A549 (cell line): ENCODE measurements at regions of chr7 and their contacts with region 1.

Region 1: DNA sequence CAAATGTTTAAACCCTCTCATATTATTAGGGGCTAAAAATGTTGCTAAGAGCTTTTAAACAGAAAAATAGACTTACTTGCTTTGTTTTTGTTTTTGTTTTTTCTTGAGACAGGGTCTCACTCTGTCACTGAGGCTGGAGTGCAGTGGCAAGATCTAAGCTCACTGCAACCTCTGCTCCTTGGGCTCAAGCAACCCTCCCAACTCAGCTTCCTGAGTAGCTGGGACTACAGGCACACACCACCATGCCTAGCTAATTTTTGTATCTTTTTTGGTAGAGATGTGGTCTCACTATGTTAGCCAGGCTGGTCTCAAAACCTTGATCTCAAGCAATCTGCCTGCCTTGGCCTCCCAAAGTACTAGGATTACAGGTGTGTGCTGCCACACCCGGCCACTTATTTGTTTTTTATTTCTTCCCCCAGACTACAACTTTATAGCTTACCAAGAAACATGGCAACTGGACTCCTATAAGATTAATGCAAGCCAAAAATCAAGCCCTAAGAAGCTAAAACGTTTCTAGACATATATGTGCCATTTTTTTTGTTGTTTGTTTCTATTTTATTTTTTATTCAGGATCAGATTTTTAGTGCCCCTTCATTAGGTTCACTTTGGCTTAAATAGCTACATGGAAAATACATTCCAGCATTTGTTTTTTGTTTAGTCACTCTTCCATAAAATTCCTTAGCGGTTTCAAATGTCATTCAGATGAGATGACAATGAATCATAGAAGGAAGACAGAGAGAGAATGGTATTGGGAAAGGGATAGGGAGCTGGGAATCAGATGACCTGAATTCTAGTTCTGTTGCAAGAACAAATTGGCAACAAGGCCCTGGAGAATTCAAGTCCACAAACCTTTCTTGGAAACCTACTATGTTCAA is 163.4 kb upstream of the MKLN1 start:
- DNase-seq: peak; percentile 86 to 96
- ATAC-seq: peak; percentile 84 to 97
- H3K4me3 ChIP-seq: peak overlapping the region; percentile 32
- H3K27ac ChIP-seq: peak overlapping the region; percentile 93 to 94
- H3K4me1 ChIP-seq: peaks cover 75% of the 10 kb centered on the region
- CTCF ChIP-seq: no peak
- EP300 ChIP-seq: peak; percentile 83 to 86; a peak in 3 of 5 replicates
- POLR2A ChIP-seq: no peak
- RAD21 ChIP-seq: peak in 1 of 2 experiments; percentile 32; a peak in 3 of 5 replicates

Region 2: DNA sequence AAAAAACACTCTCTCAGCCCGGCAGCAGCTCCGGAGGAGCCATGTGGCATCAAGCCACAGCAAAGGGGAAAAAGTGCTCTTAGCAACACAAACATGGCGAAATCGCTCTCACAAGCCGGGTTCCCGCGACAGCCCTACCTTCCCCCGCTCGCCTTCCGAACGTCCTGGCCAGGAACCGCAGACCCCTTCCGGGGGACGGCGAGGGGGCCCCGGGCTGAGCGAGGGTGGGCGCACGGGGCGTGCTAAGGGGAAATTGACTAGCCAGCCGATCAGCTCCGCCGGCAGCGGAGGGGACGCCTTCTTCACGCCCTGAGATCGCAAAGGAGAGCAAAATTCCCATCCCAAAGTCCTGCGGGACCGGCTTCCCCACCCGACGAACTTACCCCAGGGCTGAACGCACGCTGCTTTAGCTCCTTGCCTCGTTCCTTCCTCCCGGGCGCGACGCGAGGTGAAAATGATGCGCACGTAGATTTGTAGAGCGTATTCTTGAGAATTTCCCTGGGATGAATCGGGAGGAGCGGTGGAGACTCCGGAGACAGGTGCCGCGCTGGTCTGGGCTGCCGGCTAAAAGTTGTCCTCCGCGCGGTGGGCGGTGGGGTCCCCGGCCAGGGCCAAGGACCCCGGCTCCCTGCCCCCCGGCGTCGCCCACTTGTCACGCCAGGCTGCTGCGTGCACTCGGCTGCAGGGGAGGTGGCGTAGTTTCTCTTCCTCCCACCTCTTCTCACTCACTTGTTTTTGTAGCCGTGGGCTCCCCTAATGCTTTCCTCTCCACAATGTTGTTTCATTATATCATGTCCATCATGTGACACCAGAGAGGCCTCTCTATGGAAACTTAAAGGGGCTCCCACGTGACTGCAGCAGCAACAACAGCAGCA is 56.7 kb before region 1 on chr7:
- CTCF ChIA-PET with region 1: interaction called, 11 read pairs
- POLR2A ChIA-PET with region 1: interaction called, 52 read pairs
- DNase-seq: peak; percentile 80 to 88
- ATAC-seq: peak; percentile 38 to 53; a peak in 5 of 6 replicates
- H3K4me3 ChIP-seq: peak overlapping the region; percentile 78
- H3K27ac ChIP-seq: peak overlapping the region; percentile 98 to 99
- H3K4me1 ChIP-seq: peaks cover 36% of the 10 kb centered on the region
- CTCF ChIP-seq: no peak
- EP300 ChIP-seq: no peak
- POLR2A ChIP-seq: no peak
- RAD21 ChIP-seq: peak in 1 of 2 experiments; percentile 20; a peak in 2 of 5 replicates

Region 3: DNA sequence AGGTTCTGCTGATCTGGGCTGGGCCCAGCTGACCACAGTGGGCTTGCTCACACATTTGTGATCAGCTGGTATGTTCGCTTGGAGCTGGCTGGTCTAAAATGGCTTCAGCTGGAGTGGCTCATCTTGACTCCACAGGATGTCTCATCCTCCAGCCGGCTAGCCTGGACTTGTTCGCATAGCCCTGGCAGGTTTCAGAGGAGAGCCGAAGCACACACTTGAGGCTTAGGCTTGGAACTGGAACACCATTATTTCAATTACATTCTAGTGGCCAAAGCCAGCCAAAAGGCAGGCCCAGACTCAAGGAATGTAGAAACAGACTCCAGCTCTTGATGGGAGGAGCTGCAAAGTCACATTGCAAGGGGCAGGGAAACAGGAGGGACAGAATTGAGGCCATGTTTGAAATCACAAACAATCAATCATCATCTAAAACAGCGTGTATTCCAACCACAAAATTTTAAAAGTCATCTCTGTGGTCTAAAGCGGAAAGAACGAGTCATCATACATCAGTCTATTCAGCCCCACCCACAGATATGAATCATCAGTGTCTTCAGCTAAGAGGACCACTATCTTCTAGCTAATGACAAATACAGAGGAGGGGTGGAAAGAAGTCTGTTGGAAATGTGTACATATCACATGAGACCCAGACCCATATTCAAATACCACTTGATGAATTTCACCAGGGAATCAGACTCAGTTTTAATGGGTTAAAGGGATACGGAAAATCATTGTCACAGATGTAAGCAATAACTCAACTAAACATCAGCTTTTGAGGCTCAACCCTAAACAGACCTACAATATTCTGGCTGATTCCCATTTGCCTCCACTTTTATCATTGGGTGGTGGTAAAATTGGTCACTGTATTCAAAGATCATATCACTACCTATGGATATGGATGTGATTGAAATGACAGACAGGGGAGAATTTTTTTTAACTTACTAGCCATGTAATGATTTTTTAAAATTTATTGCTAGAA is 24.4 kb after region 1 on chr7:
- CTCF ChIA-PET with region 1: interaction called, 9 read pairs
- POLR2A ChIA-PET with region 1: interaction called, 21 read pairs
- DNase-seq: peak; percentile 79 to 90
- ATAC-seq: peak; percentile 74 to 79
- H3K4me3 ChIP-seq: no peak overlapping the region
- H3K27ac ChIP-seq: peak overlapping the region; percentile 72 to 90
- H3K4me1 ChIP-seq: peaks cover 75% of the 10 kb centered on the region
- CTCF ChIP-seq: no peak
- EP300 ChIP-seq: peak in 1 of 2 experiments; percentile 54; a peak in 2 of 5 replicates
- POLR2A ChIP-seq: no peak
- RAD21 ChIP-seq: no peak

Region 4: DNA sequence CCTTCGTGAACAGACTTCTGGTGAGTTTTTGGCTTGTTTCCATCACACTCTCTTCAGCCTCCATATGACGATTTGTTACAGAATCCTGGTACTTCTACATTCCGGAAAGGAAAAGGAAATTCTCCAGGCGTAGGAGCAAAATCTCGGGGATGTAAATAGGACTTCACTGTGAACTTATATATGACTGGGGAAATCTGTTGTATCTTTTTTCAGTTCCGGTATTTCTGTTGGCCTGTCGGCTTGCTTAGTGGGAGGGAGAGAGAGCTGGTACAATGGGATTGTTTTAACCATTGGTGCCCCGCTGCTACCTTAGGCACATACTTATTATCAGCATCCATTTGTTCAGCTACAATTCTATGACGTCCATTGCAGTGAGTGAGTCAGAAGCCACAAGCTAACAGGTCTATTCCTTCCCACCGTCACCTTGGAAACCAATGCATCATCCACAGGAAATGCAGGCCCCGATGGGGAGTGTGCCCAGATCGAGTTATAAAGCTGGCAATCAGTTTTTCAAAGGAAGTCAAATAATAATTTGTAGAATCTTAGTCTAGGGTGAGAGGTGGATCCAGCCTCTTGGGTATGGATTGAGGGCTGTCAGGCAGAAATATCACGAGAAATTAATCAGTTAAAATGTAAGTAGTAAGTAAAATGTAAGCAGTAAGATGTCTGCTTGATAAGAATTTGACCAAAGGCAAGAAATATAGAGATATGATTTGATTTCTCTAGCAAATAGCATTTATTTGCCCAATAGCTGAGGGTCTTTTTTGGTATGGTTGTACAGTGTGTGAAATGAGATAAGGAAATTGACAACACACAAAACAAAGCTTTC is 71.4 kb after region 1 on chr7:
- CTCF ChIA-PET with region 1: no interaction called
- POLR2A ChIA-PET with region 1: interaction called, 13 read pairs
- DNase-seq: peak; percentile 95 to 99
- ATAC-seq: peak; percentile 96 to 98
- H3K4me3 ChIP-seq: peak overlapping the region; percentile 27
- H3K27ac ChIP-seq: peak overlapping the region; percentile 91 to 96
- H3K4me1 ChIP-seq: peaks cover 69% of the 10 kb centered on the region
- CTCF ChIP-seq: no peak
- EP300 ChIP-seq: peak in 1 of 2 experiments; percentile 60; a peak in 1 of 5 replicates
- POLR2A ChIP-seq: no peak
- RAD21 ChIP-seq: peak; percentile 24 to 42

Region 5: GRCh38 chr7:131327626-131328376 is 163.5 kb after region 1 on chr7 and contains the start of gene MKLN1:
- CTCF ChIA-PET with region 1: no interaction called
- POLR2A ChIA-PET with region 1: interaction called, 11 read pairs
- DNase-seq: peak; percentile 83 to 91
- ATAC-seq: peak; percentile 93 to 95
- H3K4me3 ChIP-seq: peak within 1 kb of the TSS; percentile 91
- H3K27ac ChIP-seq: peak within 1 kb of the TSS; percentile 98
- H3K4me1 ChIP-seq: peaks cover 62% of the 10 kb centered on the region
- CTCF ChIP-seq: no peak
- EP300 ChIP-seq: no peak
- POLR2A ChIP-seq: peak; percentile 89
- RAD21 ChIP-seq: peak; percentile 1 to 22; a peak in 1 of 5 replicates
- polyA plus RNA-seq, gene MKLN1: 84.5 and 109 TPM in 2 replicates

Region 6: GRCh38 chr7:131370523-131370968 is 206.3 kb after region 1 on chr7:
- CTCF ChIA-PET with region 1: no interaction called
- POLR2A ChIA-PET with region 1: no interaction called
- DNase-seq: no peak
- ATAC-seq: peak in 1 of 2 experiments; percentile 78; a peak in 3 of 6 replicates
- H3K4me3 ChIP-seq: no peak overlapping the region
- H3K27ac ChIP-seq: peak overlapping the region in 1 of 2 experiments; percentile 38; a peak in 3 of 6 replicates
- H3K4me1 ChIP-seq: peaks cover 60% of the 10 kb centered on the region
- CTCF ChIP-seq: no peak
- EP300 ChIP-seq: no peak
- POLR2A ChIP-seq: no peak
- RAD21 ChIP-seq: no peak